Lower leg skin (tissue), 4 donors: ENCODE measurements at regions of chr6 and their contacts with region 1.

Region 1: GRCh38 chr6:44096612-44097011 is 30.6 kb downstream of the MRPL14 start:
- DNase-seq: peak; percentile 71 to 94
- H3K4me3 ChIP-seq: no peak overlapping the region
- CTCF ChIP-seq: peak in 1 of 3 donors; percentile 76
- POLR2A ChIP-seq: no peak

Region 2: DNA sequence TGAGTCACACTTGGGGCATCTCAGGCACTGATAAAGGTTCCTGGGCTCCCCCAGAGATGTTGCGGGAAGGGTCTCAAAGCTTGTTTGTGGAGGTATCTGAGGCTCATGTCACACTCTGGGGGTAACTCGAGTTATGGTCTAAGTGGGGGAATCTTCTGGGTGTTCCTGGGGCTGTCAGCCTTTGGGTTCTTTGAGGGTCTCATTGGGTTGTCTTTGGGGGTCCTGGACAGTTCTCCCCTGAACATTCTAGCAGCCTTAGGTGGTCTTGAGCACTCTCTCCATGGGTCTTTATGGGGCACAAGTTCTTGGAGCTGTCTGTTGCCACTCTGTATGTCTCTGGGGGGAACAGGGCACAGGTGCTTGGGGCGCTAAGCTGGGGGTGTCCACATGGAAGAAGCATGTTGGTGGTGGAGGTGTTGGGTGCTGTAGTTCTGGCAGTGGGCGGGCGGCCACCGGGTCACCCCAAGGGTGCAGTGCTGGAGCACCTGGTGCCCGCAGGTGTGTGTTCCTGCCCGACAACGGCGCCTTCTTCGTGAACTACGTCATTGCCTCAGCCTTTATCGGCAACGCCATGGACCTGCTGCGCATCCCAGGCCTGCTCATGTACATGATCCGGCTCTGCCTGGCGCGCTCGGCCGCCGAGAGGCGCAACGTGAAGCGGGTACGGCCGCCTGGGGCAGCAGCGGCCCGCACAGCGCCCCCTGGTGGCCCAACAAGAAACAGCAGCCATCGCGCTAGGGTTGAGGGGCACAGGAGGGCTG is 54.9 kb after region 1 on chr6:
- intact Hi-C with region 1: loop called (anchors 2 kb)
- DNase-seq: peak; percentile 53 to 94
- H3K4me3 ChIP-seq: no peak overlapping the region
- CTCF ChIP-seq: peak in 1 of 3 donors; percentile 92
- POLR2A ChIP-seq: no peak